ENCODE measurements at regions of chr14 and their contacts with region 1.

Region 1: DNA sequence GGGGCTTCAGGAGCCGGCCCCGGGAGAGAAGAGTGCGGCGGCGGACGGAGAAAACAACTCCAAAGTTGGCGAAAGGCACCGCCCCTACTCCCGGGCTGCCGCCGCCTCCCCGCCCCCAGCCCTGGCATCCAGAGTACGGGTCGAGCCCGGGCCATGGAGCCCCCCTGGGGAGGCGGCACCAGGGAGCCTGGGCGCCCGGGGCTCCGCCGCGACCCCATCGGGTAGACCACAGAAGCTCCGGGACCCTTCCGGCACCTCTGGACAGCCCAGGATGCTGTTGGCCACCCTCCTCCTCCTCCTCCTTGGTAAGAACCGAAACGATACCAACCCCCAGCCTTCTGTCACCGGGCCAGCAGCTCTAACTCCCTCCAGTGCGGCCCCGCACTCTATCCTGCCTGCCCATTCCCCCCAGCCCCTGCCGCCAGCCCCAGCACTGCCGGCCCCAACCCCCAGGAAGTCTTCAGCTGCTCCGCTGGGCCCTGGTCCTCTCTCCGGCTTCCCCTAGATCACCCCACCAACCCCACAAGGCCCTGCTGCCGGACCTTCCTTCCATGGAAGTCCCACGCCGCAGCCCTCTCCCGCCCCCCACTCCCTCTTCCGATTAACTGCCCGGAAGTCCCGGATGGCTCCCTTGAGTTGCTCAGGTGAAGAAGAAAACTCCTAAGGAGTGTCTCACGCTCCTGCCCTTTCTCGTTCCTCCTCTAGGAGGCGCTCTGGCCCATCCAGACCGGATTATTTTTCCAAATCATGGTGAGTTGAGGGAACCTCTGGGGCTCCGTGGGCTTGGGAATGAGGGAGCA is 693 bp downstream of the LRP10 start:
- DNase-seq: peak; percentile 81
- ATAC-seq: peak; percentile 63
- H3K4me3 ChIP-seq: peak overlapping the region; percentile 79
- H3K27ac ChIP-seq: peak overlapping the region; percentile 84
- H3K4me1 ChIP-seq: peaks cover 3% of the 10 kb centered on the region; the same call in 1 of the 2 replicates
- H3K27me3 ChIP-seq: no peaks in the 10 kb centered on the region
- CTCF ChIP-seq: peak; percentile 91
- POLR2A ChIP-seq: no peak
- RAD21 ChIP-seq: peak; percentile 72

Region 2: GRCh38 chr14:22653012-22653621 is 219.1 kb before region 1 on chr14:
- CTCF ChIA-PET with region 1: no interaction called
- POLR2A ChIA-PET with region 1: no interaction called
- dilution Hi-C with region 1: no loop called
- in situ Hi-C with region 1: no loop called
- intact Hi-C with region 1: no loop called
- DNase-seq: peak; percentile 74
- ATAC-seq: peak; percentile 97
- H3K4me3 ChIP-seq: no peak overlapping the region
- H3K27ac ChIP-seq: no peak overlapping the region
- H3K4me1 ChIP-seq: no peaks in the 10 kb centered on the region
- H3K27me3 ChIP-seq: 0 out of 2 replicates have a peak, but pooled peaks cover 1% of the 10 kb centered on the region
- CTCF ChIP-seq: peak; percentile 95
- POLR2A ChIP-seq: 0 out of 2 replicates have a peak, but pooled peaks have one; percentile 23
- RAD21 ChIP-seq: peak; percentile 93

Region 3: GRCh38 chr14:22886500-22887259 is 14.4 kb after region 1 on chr14:
- CTCF ChIA-PET with region 1: interaction called, 10 read pairs
- POLR2A ChIA-PET with region 1: interaction called, 6 read pairs
- dilution Hi-C with region 1: no loop called
- in situ Hi-C with region 1: no loop called
- intact Hi-C with region 1: loop called (anchors 2 kb)
- DNase-seq: peak; percentile 13
- ATAC-seq: peak; percentile 81
- H3K4me3 ChIP-seq: peak overlapping the region; percentile 47
- H3K27ac ChIP-seq: peak overlapping the region; percentile 6; the same call in 1 of the 2 replicates
- H3K4me1 ChIP-seq: peaks cover 5% of the 10 kb centered on the region; the same call in 1 of the 2 replicates
- H3K27me3 ChIP-seq: no peaks in the 10 kb centered on the region
- CTCF ChIP-seq: 0 out of 2 replicates have a peak, but pooled peaks have one; percentile 10
- POLR2A ChIP-seq: no peak
- RAD21 ChIP-seq: no peak

Region 4: DNA sequence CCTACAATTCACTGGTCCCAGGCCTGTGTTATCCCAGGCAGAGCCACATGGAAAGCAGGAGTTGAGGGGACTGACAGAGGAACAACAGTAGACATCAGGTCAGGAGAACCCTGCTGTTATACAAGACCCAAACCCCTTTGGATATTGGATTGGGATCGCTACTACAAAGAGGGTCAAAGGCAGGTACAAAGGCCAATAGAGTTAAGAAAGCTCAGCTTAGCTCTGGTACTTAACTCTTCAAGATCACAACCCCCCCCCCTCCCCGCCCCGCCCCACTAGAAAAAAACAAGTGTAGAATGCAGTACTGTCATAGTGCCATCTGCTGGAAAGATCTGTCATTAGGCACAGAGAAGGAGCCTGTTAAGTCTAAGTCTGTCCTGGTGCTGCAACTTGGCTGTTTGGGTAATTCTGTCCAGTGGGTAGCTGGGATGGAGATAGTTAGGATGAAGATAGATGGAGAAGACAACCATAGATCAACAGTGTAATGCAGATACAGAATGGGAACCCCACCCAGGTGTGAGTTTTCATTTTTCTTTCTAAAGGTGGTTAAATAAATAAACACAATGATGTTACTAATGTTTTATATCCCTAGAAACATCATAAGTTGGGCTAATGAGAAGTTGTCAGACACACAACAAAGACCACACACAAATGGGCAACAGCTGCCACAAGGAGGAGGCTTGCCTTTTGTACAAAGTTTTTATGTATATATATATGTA is 28.0 kb after region 1 on chr14:
- CTCF ChIA-PET with region 1: interaction called, 5 read pairs
- POLR2A ChIA-PET with region 1: no interaction called
- dilution Hi-C with region 1: no loop called
- in situ Hi-C with region 1: no loop called
- intact Hi-C with region 1: loop called (anchors 1 kb)
- DNase-seq: peak; percentile 78
- ATAC-seq: peak; percentile 81
- H3K4me3 ChIP-seq: no peak overlapping the region
- H3K27ac ChIP-seq: no peak overlapping the region
- H3K4me1 ChIP-seq: peaks cover 17% of the 10 kb centered on the region
- H3K27me3 ChIP-seq: no peaks in the 10 kb centered on the region
- CTCF ChIP-seq: peak; percentile 74
- POLR2A ChIP-seq: no peak
- RAD21 ChIP-seq: peak; percentile 71

Region 5: GRCh38 chr14:22918804-22919600 is 46.8 kb after region 1 on chr14 and contains the start of gene RBM23:
- CTCF ChIA-PET with region 1: no interaction called
- POLR2A ChIA-PET with region 1: no interaction called
- dilution Hi-C with region 1: no loop called
- in situ Hi-C with region 1: no loop called
- intact Hi-C with region 1: loop called (anchors 1 kb)
- DNase-seq: peak; percentile 100
- ATAC-seq: peak; percentile 97
- H3K4me3 ChIP-seq: peak within 1 kb of the TSS; percentile 57
- H3K27ac ChIP-seq: peak within 1 kb of the TSS; percentile 82
- H3K4me1 ChIP-seq: peaks cover 9% of the 10 kb centered on the region
- H3K27me3 ChIP-seq: no peaks in the 10 kb centered on the region
- CTCF ChIP-seq: no peak
- POLR2A ChIP-seq: peak; percentile 88
- RAD21 ChIP-seq: no peak
- total RNA-seq, gene RBM23: 375 and 830 TPM in 2 replicates